ENCODE measurements at regions of chr5 and their contacts with region 1.

Region 1: GRCh38 chr5:56757071-56757470 is 58.3 kb upstream of the MAP3K1 start:
- DNase-seq: peak; percentile 94 to 95
- H3K4me3 ChIP-seq: 0 out of 2 replicates have a peak overlapping the region, but pooled peaks have one; percentile 13
- H3K27ac ChIP-seq: peak overlapping the region; percentile 65
- H3K4me1 ChIP-seq: peaks cover 48% of the 10 kb centered on the region
- H3K27me3 ChIP-seq: no peaks in the 10 kb centered on the region
- CTCF ChIP-seq: no peak

Region 2: DNA sequence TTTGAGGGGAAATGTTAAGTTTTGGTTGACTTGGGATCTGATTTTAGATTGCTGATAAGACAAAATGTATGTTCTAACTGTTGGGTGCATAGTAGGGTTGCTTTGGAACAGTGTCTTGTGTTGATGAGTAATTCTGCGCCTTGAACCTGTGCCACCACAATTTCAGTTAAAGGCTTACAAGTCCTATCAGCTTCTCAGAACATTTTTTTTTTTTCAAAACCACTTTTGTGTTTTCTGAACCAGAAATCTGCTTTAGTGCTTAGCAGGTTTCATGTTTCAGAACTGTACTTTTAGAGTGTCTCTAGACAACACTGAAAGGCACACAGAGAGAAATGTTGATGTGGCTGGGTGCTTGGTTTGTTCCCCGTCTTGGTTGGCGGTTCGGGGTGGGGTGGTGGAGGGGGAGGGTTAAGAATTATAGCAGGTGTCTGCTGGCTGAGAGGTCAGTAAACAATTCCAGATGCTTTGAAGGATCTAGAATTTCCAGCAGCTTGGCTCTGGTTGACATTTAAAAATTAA is 608.6 kb before region 1 on chr5:
- CTCF ChIA-PET with region 1: no interaction called
- POLR2A ChIA-PET with region 1: interaction called, 32 read pairs
- intact Hi-C with region 1: no loop called
- DNase-seq: no peak
- H3K4me3 ChIP-seq: no peak overlapping the region
- H3K27ac ChIP-seq: no peak overlapping the region
- H3K4me1 ChIP-seq: peaks cover 27% of the 10 kb centered on the region
- H3K27me3 ChIP-seq: no peaks in the 10 kb centered on the region
- CTCF ChIP-seq: no peak

Region 3: GRCh38 chr5:56490951-56491468 is 266.1 kb before region 1 on chr5:
- CTCF ChIA-PET with region 1: no interaction called
- POLR2A ChIA-PET with region 1: no interaction called
- intact Hi-C with region 1: loop called (anchors 2 kb)
- DNase-seq: peak; percentile 87 to 97
- H3K4me3 ChIP-seq: peak overlapping the region; percentile 41; the same call in 1 of the 2 replicates
- H3K27ac ChIP-seq: peak overlapping the region; percentile 83
- H3K4me1 ChIP-seq: peaks cover 32% of the 10 kb centered on the region
- H3K27me3 ChIP-seq: no peaks in the 10 kb centered on the region
- CTCF ChIP-seq: no peak

Region 4: GRCh38 chr5:56543441-56544390 is 213.4 kb before region 1 on chr5:
- CTCF ChIA-PET with region 1: no interaction called
- POLR2A ChIA-PET with region 1: no interaction called
- intact Hi-C with region 1: loop called (anchors 2 kb)
- DNase-seq: peak; percentile 62 to 97
- H3K4me3 ChIP-seq: no peak overlapping the region
- H3K27ac ChIP-seq: peak overlapping the region; percentile 96
- H3K4me1 ChIP-seq: peaks cover 39% of the 10 kb centered on the region
- H3K27me3 ChIP-seq: no peaks in the 10 kb centered on the region
- CTCF ChIP-seq: no peak

Region 5: GRCh38 chr5:56670118-56670483 is 87.0 kb before region 1 on chr5:
- CTCF ChIA-PET with region 1: no interaction called
- POLR2A ChIA-PET with region 1: no interaction called
- intact Hi-C with region 1: loop called (anchors 5 kb)
- DNase-seq: peak in 1 of 2 experiments; percentile 77
- H3K4me3 ChIP-seq: no peak overlapping the region
- H3K27ac ChIP-seq: peak overlapping the region; percentile 89
- H3K4me1 ChIP-seq: peaks cover 53% of the 10 kb centered on the region
- H3K27me3 ChIP-seq: no peaks in the 10 kb centered on the region
- CTCF ChIP-seq: no peak

Region 6: GRCh38 chr5:56774957-56775356 is 17.9 kb after region 1 on chr5:
- CTCF ChIA-PET with region 1: no interaction called
- POLR2A ChIA-PET with region 1: no interaction called
- intact Hi-C with region 1: no loop called
- DNase-seq: no peak
- H3K4me3 ChIP-seq: no peak overlapping the region
- H3K27ac ChIP-seq: no peak overlapping the region
- H3K4me1 ChIP-seq: no peaks in the 10 kb centered on the region
- H3K27me3 ChIP-seq: no peaks in the 10 kb centered on the region
- CTCF ChIP-seq: no peak

Measured in PC-9 (cell line).